Posterior cingulate gyrus (tissue), 11 donors: ENCODE measurements at regions of chr2 and their contacts with region 1.

Region 1: DNA sequence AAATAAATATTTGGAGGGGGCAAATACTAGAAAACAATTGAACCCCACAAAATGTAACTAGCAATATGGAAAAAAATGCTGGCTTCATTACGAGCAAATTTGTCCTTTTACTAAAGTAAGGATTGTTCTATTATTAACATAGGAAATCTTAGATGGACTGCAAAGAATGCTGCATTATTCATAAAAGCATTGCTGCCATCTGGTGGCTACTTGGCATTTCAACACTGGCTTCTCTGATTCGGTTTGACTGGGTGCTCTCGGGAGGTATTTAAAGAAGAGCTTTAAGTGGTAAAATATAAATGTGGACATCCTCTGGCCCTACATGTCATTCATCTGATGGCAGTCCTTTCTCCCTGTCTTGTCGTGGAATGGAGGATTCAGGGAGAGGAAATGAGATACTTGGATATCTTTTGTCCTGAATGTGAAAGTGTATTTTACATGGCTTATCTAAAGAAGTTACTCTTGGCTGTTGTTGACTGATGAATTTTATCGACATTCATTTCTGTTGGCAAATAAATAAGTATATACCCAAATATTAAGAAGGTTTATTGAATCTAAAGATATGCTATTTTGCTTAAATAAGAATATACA is 130.2 kb downstream of the ARHGAP15 start:
- DNase-seq: peak in 7 of 10 donors; percentile 14 to 88 (median 56)

Region 2: GRCh38 chr2:143034292-143035074 is 225.0 kb before region 1 on chr2:
- intact Hi-C with region 1: loop called (anchors 5 kb)
- DNase-seq: peak in 4 of 10 donors; percentile 18 to 59 (median 42)

Region 3: GRCh38 chr2:143110758-143111428 is 148.6 kb before region 1 on chr2:
- intact Hi-C with region 1: loop called (anchors 2 kb)
- DNase-seq: peak in 6 of 10 donors; percentile 10 to 65 (median 45)

Region 4: DNA sequence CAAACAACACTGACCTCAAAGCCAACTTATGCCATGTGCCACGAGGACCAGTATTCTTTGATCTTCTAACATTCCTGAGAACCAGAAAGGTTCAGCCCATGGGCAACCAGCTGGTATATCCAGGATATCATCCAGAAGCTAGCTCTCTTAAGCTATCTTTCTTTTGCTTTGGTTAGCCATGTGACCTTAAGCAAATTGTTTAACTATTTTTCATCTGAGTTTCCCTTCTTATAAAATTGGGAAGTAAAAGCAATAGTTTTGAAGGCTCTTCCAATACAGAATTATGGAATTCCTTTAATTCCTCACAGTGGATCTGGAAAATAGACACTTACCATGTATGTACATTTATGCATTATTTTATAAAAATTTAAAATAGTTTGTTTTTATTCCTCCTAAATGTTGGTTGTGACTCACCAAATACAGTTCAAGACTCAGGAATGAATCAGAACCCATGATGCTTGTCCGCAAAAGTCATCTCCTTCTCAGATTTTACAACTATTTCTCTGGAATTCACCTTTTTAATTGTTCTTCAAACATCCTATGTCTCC is 824.7 kb after region 1 on chr2:
- intact Hi-C with region 1: no loop called
- DNase-seq: no peak